ENCODE measurements at regions of chrX and their contacts with region 1.

Region 1: GRCh38 chrX:129957241-129958082 is 25.0 kb upstream of the BCORL1 start:
- DNase-seq: peak; percentile 71
- ATAC-seq: peak; percentile 61
- H3K4me3 Mint-ChIP-seq: peak overlapping the region; percentile 53
- H3K27ac Mint-ChIP-seq: peak overlapping the region; percentile 42
- H3K4me1 Mint-ChIP-seq: peaks cover 12% of the 10 kb centered on the region
- H3K27me3 Mint-ChIP-seq: peaks cover 2% of the 10 kb centered on the region

Region 2: DNA sequence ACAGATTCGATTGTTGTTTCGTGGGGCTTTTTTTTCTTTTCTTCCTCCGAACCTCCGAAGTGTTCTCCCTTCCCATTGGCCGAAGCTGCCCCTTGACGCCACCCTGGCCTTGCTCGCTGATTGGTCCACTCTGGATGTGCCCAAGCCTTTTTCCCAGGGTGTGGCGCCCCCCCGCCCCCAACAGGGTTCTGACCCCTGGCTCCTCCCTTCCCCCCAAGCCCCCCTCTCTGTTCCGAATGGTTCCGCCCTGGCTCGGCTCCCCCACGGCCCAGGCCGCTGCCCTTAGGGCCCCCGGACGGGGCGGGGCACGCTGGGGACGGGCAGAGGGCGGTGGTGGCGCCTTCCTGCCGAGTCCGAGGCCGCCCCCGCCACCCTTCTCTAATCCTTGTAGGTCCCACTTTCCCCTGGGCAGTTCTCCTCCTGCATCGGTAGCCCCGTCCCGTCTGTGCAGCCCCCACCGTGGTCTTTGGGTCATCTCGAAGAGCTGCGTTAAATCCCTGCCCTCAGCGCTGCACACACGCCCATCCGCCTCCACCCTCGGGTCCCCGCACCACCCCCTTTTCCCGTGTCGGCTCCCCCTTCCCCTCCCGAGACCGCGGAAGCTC is 25.9 kb before region 1 on chrX:
- CTCF ChIA-PET with region 1: interaction called, 3 read pairs
- POLR2A ChIA-PET with region 1: no interaction called
- intact Hi-C with region 1: loop called in 1 of 2 experiments (anchors 2 kb)
- DNase-seq: peak; percentile 75
- ATAC-seq: peak; percentile 78
- H3K4me3 Mint-ChIP-seq: peak overlapping the region; percentile 62
- H3K27ac Mint-ChIP-seq: peak overlapping the region; percentile 73
- H3K4me1 Mint-ChIP-seq: peaks cover 4% of the 10 kb centered on the region
- H3K27me3 Mint-ChIP-seq: peaks cover 2% of the 10 kb centered on the region

Measured in activated CD4-positive, alpha-beta T cell treated with anti-CD3 and anti-CD28 coated beads for 36 hours (primary cell).